Right ventricle myocardium superior (tissue), 1 donor: ENCODE measurements at regions of chr21 and their contacts with region 1.

Region 1: GRCh38 chr21:42164064-42164789 is 54.7 kb upstream of the ABCG1 start:
- DNase-seq: peak; percentile 82
- ATAC-seq: peak; percentile 91

Region 2: GRCh38 chr21:40835184-40835694 is 1329.0 kb before region 1 on chr21:
- intact Hi-C with region 1: no loop called
- DNase-seq: no peak
- ATAC-seq: no peak

Region 3: DNA sequence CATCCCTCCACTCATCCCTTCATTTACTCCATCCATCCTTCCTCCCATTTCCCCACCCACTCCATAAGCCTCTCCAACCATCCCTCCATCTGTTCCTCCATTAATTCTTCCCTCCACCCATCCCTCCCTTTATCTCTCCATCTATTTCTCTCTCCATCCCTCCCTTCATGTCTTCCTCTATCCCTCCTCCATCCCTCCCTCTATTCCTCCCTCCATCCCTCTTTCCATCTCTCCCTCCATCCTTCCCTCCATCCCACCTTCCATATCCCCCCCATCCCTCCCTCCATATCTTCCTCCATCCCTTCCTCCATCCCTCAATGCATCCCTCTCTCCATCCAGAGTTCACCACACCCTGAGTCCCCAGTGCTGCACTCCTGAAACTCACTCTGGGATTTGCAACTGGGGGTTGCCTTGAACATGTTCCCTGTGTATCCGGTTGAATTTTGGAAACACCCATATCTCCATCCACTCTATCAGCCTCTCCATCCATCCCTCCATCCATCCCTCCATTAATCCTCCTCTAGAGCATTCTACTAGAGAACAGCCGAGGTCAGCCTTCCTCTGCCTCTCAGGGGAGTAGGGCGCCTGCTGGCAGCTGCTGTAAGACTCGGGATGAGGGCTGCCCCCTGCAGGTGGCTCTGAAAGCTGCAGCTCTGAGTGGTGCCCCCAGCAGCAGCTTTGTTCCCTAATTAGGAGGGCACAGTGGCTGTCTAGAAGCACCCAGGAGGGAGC is 94.1 kb after region 1 on chr21:
- intact Hi-C with region 1: loop called (anchors 10 kb)
- DNase-seq: peak; percentile 85
- ATAC-seq: peak; percentile 67

Region 4: DNA sequence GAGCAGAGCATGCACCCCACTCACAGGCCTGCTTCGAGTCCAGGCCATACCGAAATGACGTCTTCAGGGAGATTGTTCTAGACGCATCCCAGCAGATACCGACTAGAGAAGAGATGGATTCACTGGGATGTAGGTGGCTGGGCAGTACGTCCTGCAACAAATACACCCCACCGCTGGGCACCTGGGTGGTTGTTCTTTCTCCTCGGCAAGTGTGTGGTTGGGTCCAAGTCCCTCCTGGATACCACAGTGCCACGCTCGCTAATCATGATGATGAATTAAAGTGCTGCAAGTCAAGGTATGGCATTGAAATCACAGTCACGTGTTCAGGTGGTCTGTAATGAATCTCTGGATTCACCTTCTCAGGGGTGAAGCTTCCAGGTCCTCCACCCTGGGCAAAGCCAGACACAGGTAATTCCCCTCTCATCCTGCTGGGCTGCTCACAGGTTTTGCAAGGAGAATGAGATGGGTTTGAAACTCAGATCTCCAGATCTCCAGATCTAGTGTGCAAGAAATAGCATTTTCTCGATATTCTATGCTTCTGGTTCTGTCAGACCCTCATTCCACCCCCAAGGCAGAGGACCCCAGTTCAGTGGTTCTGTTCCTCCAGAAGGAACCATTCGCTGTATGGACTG is 285.2 kb after region 1 on chr21:
- intact Hi-C with region 1: loop called (anchors 5 kb)
- DNase-seq: no peak
- ATAC-seq: no peak